ENCODE measurements at regions of chr17 and their contacts with region 1.

Region 1: GRCh38 chr17:33750943-33751701 is 458.0 kb upstream of the ASIC2 start:
- DNase-seq: peak; percentile 15
- ATAC-seq: peak; percentile 79
- H3K4me3 ChIP-seq: no peak overlapping the region
- H3K27ac ChIP-seq: no peak overlapping the region
- H3K4me1 ChIP-seq: no peaks in the 10 kb centered on the region
- H3K27me3 ChIP-seq: no peaks in the 10 kb centered on the region; a peak in 1 of 5 replicates
- CTCF ChIP-seq: peak; percentile 81
- EP300 ChIP-seq: no peak
- POLR2A ChIP-seq: no peak
- RAD21 ChIP-seq: peak; percentile 75

Region 2: DNA sequence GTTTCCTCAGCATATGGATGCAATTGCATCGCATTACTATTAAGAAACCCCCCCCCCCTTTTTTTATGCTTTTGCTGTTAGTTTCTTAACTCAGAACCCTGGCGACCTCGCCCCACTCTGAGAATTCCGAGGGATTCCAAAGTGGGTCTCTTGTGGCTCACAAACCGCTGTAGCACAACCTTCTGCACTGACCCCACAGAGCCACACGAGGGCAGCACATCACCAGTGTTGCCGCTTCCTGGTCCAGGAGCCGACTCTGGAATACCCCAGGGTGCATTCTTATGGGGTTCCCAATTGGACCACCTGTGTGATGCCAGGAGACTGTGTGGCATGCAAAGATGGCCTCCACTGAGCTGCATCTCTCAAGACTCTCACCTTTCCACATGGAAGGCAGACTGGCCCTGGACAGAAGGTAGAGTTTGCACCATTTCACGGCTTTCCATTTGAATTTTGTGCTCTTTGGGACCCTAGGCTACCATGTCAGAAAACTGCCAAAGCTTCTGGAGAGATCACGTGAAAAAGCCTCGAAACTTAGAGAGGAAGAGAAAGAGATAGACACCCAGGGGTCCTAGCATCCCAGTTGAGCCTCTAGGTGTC is 25.3 kb before region 1 on chr17:
- CTCF ChIA-PET with region 1: interaction called, 38 read pairs
- POLR2A ChIA-PET with region 1: no interaction called
- in situ Hi-C with region 1: no loop called
- intact Hi-C with region 1: loop called (anchors 1 kb)
- DNase-seq: peak; percentile 24
- ATAC-seq: peak; percentile 69
- H3K4me3 ChIP-seq: no peak overlapping the region
- H3K27ac ChIP-seq: no peak overlapping the region
- H3K4me1 ChIP-seq: no peaks in the 10 kb centered on the region
- H3K27me3 ChIP-seq: no peaks in the 10 kb centered on the region
- CTCF ChIP-seq: peak; percentile 77
- EP300 ChIP-seq: no peak
- POLR2A ChIP-seq: no peak
- RAD21 ChIP-seq: peak; percentile 42; the same call in 1 of the 2 replicates

Region 3: DNA sequence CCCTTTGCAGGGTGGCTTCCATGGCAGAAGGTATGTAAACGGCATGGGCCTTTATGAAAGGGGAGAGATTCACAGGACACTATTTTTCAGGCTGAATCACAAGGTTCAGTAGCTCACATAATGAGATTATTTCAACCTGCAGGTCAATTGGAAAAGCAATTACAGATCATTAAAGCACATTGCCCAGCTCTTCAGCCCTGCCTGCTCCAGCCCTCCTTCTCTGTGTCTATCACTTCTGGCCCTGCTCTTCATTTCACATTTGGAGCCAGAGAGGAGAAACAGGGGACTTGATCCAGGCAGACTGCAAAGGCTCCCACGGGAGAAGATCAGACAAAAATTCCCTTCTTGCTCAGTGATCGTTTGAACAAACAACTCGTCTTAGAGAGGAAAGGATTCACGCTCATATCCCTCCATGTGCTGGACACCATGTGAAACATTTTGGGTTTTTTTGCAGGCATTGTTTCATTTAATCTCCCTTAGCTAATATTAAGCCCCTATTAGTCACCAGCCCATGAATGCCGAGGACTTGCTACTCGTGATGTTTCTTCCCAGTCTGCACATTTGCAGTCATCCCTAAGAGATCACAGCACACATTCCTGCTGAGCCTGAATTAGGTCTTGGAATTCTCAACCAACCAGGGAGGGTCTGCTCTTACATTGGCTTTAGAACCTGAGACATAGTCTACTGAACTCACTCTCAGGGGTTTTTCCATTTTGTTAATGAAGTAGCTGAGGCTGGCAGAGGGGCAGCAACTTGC is 60.1 kb after region 1 on chr17:
- CTCF ChIA-PET with region 1: no interaction called
- POLR2A ChIA-PET with region 1: no interaction called
- in situ Hi-C with region 1: loop called (anchors 10 kb)
- intact Hi-C with region 1: no loop called
- DNase-seq: no peak
- ATAC-seq: no peak
- H3K4me3 ChIP-seq: no peak overlapping the region
- H3K27ac ChIP-seq: no peak overlapping the region
- H3K4me1 ChIP-seq: no peaks in the 10 kb centered on the region
- H3K27me3 ChIP-seq: no peaks in the 10 kb centered on the region
- CTCF ChIP-seq: no peak
- EP300 ChIP-seq: no peak
- POLR2A ChIP-seq: no peak
- RAD21 ChIP-seq: no peak